Activated CD4-positive, alpha-beta memory T cell treated with anti-CD3 and anti-CD28 coated beads for 36 hours (primary cell): ENCODE measurements at regions of chr1 and their contacts with region 1.

Region 1: DNA sequence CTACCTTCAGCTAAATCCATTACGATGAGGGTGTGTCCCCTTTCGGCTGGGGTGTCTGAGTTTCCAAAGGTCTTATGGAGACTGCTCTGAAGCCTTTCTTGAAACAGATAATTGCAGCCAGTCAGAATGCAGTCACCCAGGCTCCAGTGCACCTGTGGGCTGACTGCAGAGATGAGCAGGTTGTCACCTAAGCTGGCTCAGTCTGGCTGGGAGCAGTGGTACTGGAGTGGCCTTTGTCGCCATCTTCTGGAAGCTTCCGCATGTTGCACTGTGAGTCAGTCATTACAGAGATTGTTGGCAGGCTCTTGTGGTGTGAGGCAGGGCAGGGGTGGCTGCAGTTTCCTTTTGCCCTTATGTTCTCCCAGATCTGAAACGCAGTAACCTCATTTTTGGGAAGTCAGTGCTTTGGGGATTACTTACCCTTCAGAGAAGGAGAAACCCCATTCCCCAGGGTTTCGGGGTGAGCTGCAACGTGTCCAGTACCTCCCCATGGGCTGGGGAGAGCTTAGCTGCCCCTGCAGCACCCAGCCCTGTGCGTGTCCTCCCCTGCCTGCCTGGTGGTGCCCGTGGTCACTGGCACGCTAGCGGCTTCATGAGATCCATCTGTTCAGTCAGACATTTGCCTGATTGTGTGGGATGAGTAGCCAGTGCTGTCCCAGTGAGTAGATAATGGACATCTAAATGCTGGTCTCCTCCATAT is 48.0 kb downstream of the SMYD2 start:
- DNase-seq: peak; percentile 88
- H3K4me3 Mint-ChIP-seq: no peak overlapping the region
- H3K27ac Mint-ChIP-seq: no peak overlapping the region
- H3K4me1 Mint-ChIP-seq: no peaks in the 10 kb centered on the region
- H3K27me3 Mint-ChIP-seq: no peaks in the 10 kb centered on the region

Region 2: DNA sequence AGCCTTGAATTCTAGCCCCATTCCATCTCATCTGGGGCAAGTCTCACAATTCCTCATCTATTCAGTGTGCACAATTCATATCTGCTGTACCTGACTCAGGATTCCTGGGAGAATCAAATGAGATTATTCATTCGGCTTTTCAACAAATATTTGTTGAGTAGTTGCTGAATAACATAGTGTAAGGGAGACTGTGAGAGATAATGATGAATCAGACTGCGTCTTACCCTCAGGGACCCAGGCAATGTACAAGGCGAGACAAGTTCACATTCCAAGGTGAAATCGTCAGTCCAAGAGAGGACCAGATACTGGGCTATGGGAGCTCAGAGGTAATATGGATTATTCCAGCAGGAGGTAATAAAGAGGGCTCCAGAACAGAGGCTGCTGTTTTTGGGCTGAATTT is 115.8 kb before region 1 on chr1:
- CTCF ChIA-PET with region 1: interaction called, 224 read pairs
- POLR2A ChIA-PET with region 1: interaction called, 4 read pairs
- intact Hi-C with region 1: loop called (anchors 1 kb)
- DNase-seq: no peak
- H3K4me3 Mint-ChIP-seq: no peak overlapping the region
- H3K27ac Mint-ChIP-seq: no peak overlapping the region
- H3K4me1 Mint-ChIP-seq: peaks cover 1% of the 10 kb centered on the region
- H3K27me3 Mint-ChIP-seq: peaks cover 9% of the 10 kb centered on the region

Region 3: GRCh38 chr1:214271174-214271858 is 57.6 kb before region 1 on chr1:
- CTCF ChIA-PET with region 1: interaction called, 34 read pairs
- POLR2A ChIA-PET with region 1: no interaction called
- intact Hi-C with region 1: no loop called
- DNase-seq: no peak
- H3K4me3 Mint-ChIP-seq: no peak overlapping the region
- H3K27ac Mint-ChIP-seq: no peak overlapping the region
- H3K4me1 Mint-ChIP-seq: peaks cover 11% of the 10 kb centered on the region
- H3K27me3 Mint-ChIP-seq: peaks cover 13% of the 10 kb centered on the region

Region 4: DNA sequence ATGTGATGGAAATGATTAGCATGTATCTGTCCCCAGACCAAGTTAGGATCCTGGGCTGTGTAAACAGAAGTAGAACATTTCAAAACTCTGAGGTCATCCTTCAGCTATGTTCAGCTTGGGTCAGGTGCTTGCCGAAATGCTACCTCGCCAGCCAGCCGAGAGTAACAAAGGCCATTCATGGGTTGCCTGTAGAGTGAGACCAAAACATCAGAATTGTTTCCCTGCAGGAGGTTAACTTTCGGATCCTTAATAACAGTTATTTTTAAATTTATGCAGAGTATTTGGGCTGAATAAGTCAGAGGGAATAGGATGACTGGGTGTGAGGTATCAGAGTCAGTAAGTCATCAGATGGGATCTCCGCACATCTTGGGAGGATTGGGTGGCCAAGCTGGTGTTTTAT is 12.3 kb before region 1 on chr1:
- CTCF ChIA-PET with region 1: interaction called, 24 read pairs
- POLR2A ChIA-PET with region 1: no interaction called
- intact Hi-C with region 1: no loop called
- DNase-seq: no peak
- H3K4me3 Mint-ChIP-seq: no peak overlapping the region
- H3K27ac Mint-ChIP-seq: no peak overlapping the region
- H3K4me1 Mint-ChIP-seq: peaks cover under 1% of the 10 kb centered on the region
- H3K27me3 Mint-ChIP-seq: no peaks in the 10 kb centered on the region

Region 5: GRCh38 chr1:214397497-214397896 is 68.6 kb after region 1 on chr1:
- CTCF ChIA-PET with region 1: no interaction called
- POLR2A ChIA-PET with region 1: no interaction called
- intact Hi-C with region 1: no loop called
- DNase-seq: no peak
- H3K4me3 Mint-ChIP-seq: no peak overlapping the region
- H3K27ac Mint-ChIP-seq: no peak overlapping the region
- H3K4me1 Mint-ChIP-seq: peaks cover 20% of the 10 kb centered on the region
- H3K27me3 Mint-ChIP-seq: peaks cover 2% of the 10 kb centered on the region

Region 6: DNA sequence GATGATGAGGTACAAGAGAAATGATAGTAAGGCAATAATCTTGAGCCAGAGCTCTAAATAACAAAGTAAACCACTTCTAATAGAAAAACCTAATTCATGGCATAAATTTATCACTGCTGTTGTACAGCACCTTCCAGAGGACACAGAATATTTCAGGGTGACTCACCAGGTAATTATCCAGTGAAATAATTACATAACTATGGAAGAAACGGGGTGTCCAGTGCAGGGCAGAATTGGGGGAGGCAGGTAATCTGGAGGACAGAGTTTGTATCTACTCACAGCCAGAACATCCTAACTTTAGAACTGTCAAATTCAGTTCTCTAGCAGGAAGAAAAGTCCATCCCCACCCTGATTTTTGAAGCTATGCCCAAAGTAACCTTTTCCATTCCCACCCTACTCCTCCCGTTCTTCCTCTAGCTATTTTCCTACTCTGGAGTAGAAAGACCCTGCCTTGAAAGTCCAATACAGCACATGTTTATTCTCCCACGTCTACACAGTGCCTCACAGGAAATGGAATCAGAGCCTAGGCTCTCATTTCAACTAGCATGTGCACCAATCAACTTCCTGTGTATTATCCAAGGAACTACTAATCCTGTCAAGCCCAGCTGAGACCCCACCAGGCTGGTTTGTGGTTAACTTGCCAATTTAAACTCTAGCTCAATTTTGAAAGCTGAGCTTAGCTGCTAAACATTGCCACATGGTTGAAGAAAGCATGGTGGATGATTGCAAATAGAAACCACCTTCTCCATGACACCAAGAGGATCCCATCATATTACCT is 125.9 kb after region 1 on chr1:
- CTCF ChIA-PET with region 1: interaction called, 20 read pairs
- POLR2A ChIA-PET with region 1: no interaction called
- intact Hi-C with region 1: no loop called
- DNase-seq: no peak
- H3K4me3 Mint-ChIP-seq: no peak overlapping the region
- H3K27ac Mint-ChIP-seq: no peak overlapping the region
- H3K4me1 Mint-ChIP-seq: peaks cover 14% of the 10 kb centered on the region
- H3K27me3 Mint-ChIP-seq: peaks cover 12% of the 10 kb centered on the region

Region 7: GRCh38 chr1:214593158-214593557 is 264.2 kb after region 1 on chr1:
- CTCF ChIA-PET with region 1: interaction called, 209 read pairs
- POLR2A ChIA-PET with region 1: interaction called, 4 read pairs
- intact Hi-C with region 1: no loop called
- DNase-seq: no peak
- H3K4me3 Mint-ChIP-seq: no peak overlapping the region
- H3K27ac Mint-ChIP-seq: no peak overlapping the region
- H3K4me1 Mint-ChIP-seq: no peaks in the 10 kb centered on the region
- H3K27me3 Mint-ChIP-seq: peaks cover 4% of the 10 kb centered on the region